ENCODE measurements at regions of chr9 and their contacts with region 1.

Region 1: GRCh38 chr9:21395778-21396717 is 10.8 kb upstream of the IFNA2 start:
- DNase-seq: peak; percentile 54
- CTCF ChIP-seq: peak; percentile 85

Region 2: GRCh38 chr9:21317956-21318923 is 77.8 kb before region 1 on chr9:
- CTCF ChIA-PET with region 1: interaction called, 95 read pairs
- POLR2A ChIA-PET with region 1: no interaction called
- DNase-seq: peak; percentile 28
- CTCF ChIP-seq: peak; percentile 71

Region 3: GRCh38 chr9:21334701-21335632 is 61.1 kb before region 1 on chr9 and contains the start of gene KLHL9:
- CTCF ChIA-PET with region 1: interaction called, 60 read pairs
- POLR2A ChIA-PET with region 1: no interaction called
- DNase-seq: peak; percentile 93
- CTCF ChIP-seq: no peak

Region 4: DNA sequence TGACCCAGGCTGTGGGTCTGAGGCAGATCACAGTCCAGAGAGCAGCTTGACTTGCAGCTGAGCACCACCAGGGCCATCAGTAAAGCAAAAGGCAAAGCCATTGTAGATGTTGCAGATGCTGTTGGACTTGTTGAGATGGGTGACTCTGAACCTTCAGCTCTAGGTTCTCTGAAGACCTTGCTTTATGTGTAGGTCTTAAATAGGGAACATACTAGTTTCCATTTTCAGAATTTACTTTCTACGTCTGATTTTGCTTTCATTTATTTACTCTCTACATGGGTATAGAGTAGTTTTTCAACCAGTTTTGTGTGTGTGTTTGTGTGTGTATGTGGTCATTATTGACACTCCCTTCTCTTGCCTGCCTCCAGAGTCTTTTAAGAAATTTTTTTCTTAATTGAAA is 45.3 kb before region 1 on chr9 and contains the start of gene IFNA6:
- CTCF ChIA-PET with region 1: interaction called, 13 read pairs
- POLR2A ChIA-PET with region 1: no interaction called
- DNase-seq: no peak
- CTCF ChIP-seq: no peak

Region 5: DNA sequence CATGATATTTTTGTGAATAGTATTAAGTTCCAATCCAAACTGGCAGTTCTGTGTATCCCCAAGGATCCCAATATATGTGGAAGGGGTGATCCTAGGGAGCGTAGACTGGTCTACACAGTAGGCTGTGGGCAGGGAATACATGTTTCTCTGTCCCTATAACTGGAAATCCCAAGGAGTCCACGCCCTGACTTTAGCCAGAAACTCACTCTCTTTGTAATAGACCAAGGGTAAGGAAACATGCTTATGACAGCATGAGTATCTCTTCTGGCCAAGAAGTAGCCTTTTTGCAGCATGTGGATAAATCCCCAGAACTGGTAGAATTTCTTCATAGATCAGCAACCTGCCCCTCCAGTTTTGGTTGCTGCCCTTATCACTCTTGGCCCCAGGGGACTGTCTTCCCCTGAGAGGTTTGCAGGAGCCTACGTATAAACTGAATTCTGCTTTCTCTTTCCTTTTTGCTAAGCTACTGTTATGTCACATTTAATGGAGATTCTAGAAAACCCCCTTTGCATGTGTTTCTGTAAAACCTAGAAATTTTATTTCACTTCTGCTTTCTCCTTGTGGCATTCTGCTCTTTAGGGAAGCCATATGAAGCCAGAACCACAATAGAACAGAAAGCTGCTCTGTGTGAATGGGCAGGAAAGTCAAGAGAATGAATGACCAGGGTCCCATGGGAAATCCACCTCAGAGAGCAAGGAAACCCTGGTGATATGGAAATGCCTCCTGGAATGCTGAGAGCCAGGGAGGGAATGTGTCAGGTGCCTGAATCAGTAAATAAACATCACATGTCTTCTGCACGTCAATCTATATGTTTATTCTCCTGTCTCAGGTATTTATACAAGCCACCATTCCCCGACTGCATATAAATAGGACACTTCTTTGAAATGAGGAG is 14.4 kb before region 1 on chr9:
- CTCF ChIA-PET with region 1: interaction called, 40 read pairs
- POLR2A ChIA-PET with region 1: no interaction called
- DNase-seq: peak; percentile 61
- CTCF ChIP-seq: no peak

Region 6: DNA sequence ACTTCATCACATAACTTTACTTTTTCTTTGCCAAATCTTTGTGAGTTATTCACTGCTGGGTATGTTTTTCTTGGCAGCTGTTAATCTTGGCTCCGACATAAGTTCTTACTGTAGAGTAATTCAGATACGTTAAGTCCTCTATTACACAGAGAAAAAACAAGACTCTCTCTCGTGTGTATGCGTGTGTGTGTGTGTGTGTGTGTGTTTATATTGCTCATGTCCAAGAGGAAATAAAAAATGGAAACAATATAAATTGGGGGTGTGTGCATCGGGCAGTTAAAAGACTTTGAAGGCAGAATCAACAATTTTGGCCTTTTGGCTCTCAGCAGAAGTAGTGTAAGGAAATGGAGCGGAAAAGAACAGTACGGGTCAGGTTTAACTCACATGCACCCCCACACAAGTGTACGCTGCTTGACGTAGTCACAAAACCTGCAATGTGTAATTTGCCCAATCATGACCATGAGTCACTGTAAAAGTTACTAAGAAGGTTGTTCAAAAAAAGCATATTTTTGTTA is 153.3 kb after region 1 on chr9:
- CTCF ChIA-PET with region 1: no interaction called
- POLR2A ChIA-PET with region 1: no interaction called
- DNase-seq: no peak
- CTCF ChIP-seq: no peak

Region 7: DNA sequence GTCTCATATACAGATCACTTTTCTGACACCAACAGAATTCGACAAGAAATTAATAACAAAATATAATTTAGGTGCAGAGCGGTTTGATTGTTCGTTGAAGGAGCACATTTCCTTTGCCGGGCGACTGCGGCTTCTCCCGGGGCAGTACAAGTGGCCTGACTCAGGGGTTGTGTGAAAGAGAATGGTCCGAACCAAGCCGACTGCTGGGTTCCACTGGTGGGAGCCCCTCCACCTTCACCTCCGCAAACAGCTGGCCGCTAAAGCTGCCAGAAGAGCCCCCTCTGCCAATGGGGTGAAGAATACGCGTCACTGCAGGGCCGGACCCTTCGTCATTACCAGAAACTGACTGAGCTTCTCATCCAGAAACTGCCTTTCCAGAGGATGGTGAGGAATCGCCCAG is 242.1 kb after region 1 on chr9:
- CTCF ChIA-PET with region 1: no interaction called
- POLR2A ChIA-PET with region 1: no interaction called
- DNase-seq: no peak
- CTCF ChIP-seq: no peak

Measured in GM10248 (cell line).